GM18951 (cell line): ENCODE measurements at regions of chrX and their contacts with region 1.

Region 1: DNA sequence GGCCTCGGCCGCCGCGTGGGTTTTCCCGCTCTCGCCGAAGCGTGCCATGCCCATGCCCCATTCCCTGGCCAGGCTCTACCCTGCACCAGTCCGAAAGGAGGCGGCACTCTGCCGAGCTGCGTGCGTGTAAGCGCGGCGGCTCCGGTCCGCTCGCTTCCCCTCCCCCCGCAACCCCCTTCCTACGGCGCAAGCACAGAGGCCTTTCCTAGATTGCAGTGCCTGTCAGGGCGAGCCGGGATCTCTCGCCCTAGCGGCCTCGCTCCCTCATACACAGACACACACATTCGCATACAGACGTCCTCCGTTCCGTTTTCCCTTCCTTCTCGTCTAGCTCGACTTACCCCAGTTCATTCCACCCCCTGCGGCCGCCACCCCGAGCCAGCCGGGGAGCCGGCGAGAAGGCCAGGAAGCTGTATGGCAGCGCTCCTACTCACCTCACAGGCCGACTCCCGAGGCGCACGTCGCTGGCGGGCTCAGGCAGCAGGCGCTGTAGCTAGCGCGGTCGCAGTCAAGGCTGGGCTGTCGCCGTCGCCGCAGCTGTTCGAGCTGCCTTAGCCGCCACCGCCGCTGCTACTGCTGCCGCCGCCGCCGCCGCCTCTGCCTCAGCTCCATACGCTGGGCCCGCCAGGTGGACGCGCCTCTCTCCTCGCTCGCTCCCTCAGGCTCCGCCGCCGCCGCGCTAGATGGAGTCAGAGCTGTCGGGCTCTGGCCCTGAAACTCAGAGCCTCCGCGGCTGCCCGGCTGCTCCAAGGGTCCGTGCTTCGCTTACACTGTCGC is 615 bp downstream of the NEXMIF start:
- POLR2A ChIP-seq: no peak

Region 2: GRCh38 chrX:74614093-74614909 is 310.3 kb before region 1 on chrX and contains the start of gene RLIM:
- in situ Hi-C with region 1: loop called (anchors 25 kb)
- POLR2A ChIP-seq: peak; percentile 69